ENCODE measurements at regions of chr1 and their contacts with region 1.

Region 1: DNA sequence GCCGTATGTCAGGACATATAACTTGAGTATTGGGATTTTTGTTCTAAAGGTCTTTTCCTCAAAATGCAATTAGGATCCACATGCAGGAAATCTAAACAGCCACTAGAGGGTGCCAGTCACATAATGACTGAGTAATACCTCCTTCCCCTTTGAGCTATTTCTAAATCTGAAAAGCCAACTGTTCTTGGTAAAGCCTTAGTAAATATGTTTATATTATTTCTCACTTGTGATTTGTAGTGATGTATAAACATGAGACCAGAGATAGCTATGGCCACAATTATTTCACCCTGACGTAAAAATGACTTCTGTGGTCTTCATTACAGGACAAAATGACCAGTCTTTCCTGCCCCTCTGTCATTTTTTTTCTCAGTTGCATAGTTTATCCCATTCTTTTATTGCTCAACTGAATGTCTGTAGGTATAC is 41.0 kb upstream of the DR1 start:
- DNase-seq: peak; percentile 46 to 67 (median 52)
- ATAC-seq: peak; percentile 90
- H3K4me3 ChIP-seq: no peak overlapping the region
- H3K27ac ChIP-seq: no peak overlapping the region
- H3K4me1 ChIP-seq: peaks cover 0 to 3% of the 10 kb centered on the region in 2 experiments; a peak in 2 of 5 replicates
- H3K27me3 ChIP-seq: no peaks in the 10 kb centered on the region
- CTCF ChIP-seq: peak; percentile 58 to 90 (median 79); a peak in 5 of 6 replicates
- EP300 ChIP-seq: no peak
- POLR2A ChIP-seq: no peak
- RAD21 ChIP-seq: peak; percentile 78 to 93

Region 2: DNA sequence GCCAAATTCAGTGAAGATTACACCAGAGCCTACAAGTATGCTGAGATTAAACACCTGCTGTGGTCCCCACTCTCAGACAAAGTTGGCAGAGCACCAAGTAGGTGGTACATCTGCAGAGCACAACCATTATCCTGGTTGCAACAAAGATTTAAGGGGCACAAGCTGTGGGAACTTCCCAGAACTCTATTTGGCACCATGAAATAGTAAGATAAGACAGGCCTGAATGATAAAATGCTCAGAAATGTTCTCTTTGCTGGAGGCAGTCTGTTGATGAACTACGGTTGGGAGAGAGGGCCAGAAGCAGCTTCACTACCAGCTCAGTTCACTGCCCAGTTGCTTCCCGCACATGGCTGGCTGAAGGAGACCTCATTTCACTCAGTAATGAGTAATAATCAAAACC is 453.0 kb before region 1 on chr1:
- CTCF ChIA-PET with region 1: no interaction called
- POLR2A ChIA-PET with region 1: no interaction called
- in situ Hi-C with region 1: no loop called
- intact Hi-C with region 1: no loop called
- DNase-seq: peak in 1 of 4 experiments; percentile 38
- ATAC-seq: peak; percentile 50
- H3K4me3 ChIP-seq: peak overlapping the region; percentile 7
- H3K27ac ChIP-seq: no peak overlapping the region
- H3K4me1 ChIP-seq: peaks cover 14 to 19% of the 10 kb centered on the region in 2 experiments; a peak in 4 of 5 replicates
- H3K27me3 ChIP-seq: no peaks in the 10 kb centered on the region
- CTCF ChIP-seq: no peak
- EP300 ChIP-seq: no peak
- POLR2A ChIP-seq: no peak
- RAD21 ChIP-seq: no peak

Region 3: DNA sequence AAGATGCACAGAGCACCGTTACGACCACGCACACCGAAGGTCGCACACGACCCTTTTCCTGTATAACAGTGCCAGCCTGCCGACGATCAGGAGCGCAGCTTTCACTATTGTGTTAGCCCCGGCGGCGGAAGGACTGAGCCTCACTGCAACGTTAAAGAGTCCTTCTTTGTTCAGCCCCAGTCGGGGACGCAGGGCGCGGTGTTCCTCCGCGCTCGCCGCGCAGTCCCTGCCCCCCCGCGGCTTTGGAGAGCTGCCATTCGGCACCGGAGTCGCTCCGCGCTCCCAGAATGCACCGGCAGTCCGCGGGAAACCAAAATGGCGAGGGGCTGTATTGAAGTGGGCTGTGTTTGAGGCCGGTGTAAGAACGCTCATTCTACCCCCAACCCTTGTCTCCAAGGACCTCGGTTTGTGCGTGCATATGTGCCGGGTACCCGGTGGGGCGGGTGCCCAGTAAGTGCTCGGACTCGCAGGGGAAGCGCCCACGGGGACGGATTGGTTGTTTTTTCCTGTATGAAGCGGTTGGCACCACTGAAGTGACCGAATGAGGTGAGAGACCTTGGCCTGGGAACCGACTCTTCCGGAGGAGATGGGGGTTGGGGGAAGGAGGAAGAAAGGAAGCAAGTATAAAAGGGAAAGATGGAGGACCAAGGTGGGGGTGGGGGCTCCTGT is 225.6 kb before region 1 on chr1 and contains the start of gene MTF2:
- CTCF ChIA-PET with region 1: no interaction called
- POLR2A ChIA-PET with region 1: no interaction called
- in situ Hi-C with region 1: no loop called
- intact Hi-C with region 1: loop called (anchors 5 kb)
- DNase-seq: peak; percentile 89 to 98 (median 90)
- ATAC-seq: peak; percentile 90
- H3K4me3 ChIP-seq: peak within 1 kb of the TSS; percentile 92
- H3K27ac ChIP-seq: peak within 1 kb of the TSS; percentile 96
- H3K4me1 ChIP-seq: peaks cover 0 to 6% of the 10 kb centered on the region in 2 experiments; a peak in 3 of 5 replicates
- H3K27me3 ChIP-seq: no peaks in the 10 kb centered on the region
- CTCF ChIP-seq: no peak
- EP300 ChIP-seq: peak; percentile 66
- POLR2A ChIP-seq: peak; percentile 98
- RAD21 ChIP-seq: peak; percentile 7 to 12; a peak in 2 of 4 replicates
- polyA plus RNA-seq, gene MTF2: 29.3 to 35.7 TPM

Region 4: DNA sequence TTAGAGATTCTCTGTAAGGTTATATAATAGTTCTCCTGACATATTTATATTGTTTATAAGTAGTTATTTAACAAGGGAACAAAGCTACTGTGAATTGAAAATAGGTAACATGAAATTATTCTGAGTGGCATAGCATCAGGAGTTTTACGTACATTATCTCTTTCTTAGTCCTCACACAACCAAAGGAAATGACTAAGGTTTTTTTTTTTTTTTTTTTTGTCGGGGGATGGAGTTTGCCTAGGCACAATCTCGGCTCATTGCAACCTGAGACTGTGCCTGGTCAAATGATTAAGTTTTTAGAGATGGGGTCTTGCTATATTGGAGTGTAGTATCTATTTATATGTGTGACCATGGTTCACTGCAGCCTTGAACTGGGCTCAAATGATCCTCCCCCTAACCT is 149.4 kb before region 1 on chr1:
- CTCF ChIA-PET with region 1: no interaction called
- POLR2A ChIA-PET with region 1: no interaction called
- in situ Hi-C with region 1: no loop called
- intact Hi-C with region 1: no loop called
- DNase-seq: peak in 2 of 4 experiments; percentile 16 to 25
- ATAC-seq: peak; percentile 69
- H3K4me3 ChIP-seq: no peak overlapping the region
- H3K27ac ChIP-seq: no peak overlapping the region
- H3K4me1 ChIP-seq: peaks cover 0 to 2% of the 10 kb centered on the region in 2 experiments; a peak in 1 of 5 replicates
- H3K27me3 ChIP-seq: no peaks in the 10 kb centered on the region
- CTCF ChIP-seq: no peak
- EP300 ChIP-seq: no peak
- POLR2A ChIP-seq: peak; percentile 27; the same call in 1 of the 2 replicates
- RAD21 ChIP-seq: no peak

Region 5: DNA sequence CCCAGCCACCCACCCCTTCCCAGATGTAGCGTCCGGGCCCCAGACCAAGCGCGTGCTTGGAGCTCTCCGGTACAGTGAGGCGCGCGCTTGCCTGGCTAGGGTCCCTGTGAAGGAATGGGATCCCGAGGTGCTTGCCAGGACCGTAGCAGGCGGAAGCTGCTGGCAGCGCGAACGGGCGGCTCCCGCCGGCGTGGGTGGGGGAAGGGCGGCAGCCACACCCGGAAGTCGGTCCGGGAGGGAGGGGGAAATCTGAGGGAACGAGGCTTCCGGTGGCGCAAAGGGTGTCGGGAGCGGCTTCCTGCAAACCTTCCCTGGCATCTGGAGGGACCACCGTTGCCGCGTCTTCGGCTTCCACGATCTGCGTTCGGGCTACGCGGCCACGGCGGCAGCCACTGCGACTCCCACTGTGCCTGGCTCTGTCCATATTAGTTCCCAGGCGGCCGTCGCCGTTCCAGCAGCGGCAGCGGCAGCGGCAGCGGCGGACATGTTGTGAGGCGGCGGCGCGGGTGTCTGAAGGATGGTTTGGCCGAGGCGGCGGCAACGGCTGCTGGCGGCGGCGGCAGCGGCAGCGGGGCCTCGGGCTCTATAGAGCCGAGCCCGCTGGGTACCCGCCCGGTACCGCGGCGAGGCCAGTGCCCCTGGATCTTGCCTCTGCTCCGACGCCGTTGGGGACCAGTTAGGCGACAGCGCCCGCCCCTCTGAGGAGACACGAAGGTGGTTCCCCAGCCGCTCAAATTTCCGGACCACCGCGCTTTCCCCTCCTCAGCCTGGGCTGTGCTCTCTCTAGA is 41.1 kb after region 1 on chr1 and contains the start of gene DR1:
- CTCF ChIA-PET with region 1: no interaction called
- POLR2A ChIA-PET with region 1: interaction called, 5 read pairs
- in situ Hi-C with region 1: no loop called
- intact Hi-C with region 1: loop called (anchors 5 kb)
- DNase-seq: peak; percentile 91 to 94 (median 94)
- ATAC-seq: peak; percentile 70
- H3K4me3 ChIP-seq: peak within 1 kb of the TSS; percentile 91
- H3K27ac ChIP-seq: peak within 1 kb of the TSS; percentile 99
- H3K4me1 ChIP-seq: peaks cover 0 to 4% of the 10 kb centered on the region in 2 experiments; a peak in 3 of 5 replicates
- H3K27me3 ChIP-seq: no peaks in the 10 kb centered on the region
- CTCF ChIP-seq: no peak
- EP300 ChIP-seq: peak; percentile 62
- POLR2A ChIP-seq: peak; percentile 98
- RAD21 ChIP-seq: no peak
- polyA plus RNA-seq, gene DR1: 8.1 to 9.3 TPM

Region 6: DNA sequence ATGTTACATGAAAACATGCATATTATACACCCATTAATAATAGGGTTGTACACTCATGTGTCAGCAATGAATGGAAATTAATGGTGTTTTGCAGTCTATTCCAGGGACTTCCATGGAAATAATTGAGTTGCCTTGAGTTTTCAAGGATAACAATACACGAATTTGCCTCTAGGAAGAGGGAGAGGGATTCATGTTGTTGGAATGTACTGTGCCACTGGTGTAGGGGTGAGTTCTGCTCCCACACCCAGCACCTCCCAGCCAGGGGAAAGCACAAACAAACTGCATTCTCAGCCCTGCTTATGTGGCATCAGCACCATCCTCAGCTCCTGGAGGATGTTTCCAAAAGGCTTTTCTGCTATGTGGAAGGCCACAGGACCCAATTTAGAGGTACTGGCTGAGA is 319.1 kb after region 1 on chr1:
- CTCF ChIA-PET with region 1: interaction called, 4 read pairs
- POLR2A ChIA-PET with region 1: no interaction called
- in situ Hi-C with region 1: loop called (anchors 10 kb)
- intact Hi-C with region 1: loop called (anchors 2 kb)
- DNase-seq: no peak
- ATAC-seq: no peak
- H3K4me3 ChIP-seq: no peak overlapping the region
- H3K27ac ChIP-seq: no peak overlapping the region
- H3K4me1 ChIP-seq: no peaks in the 10 kb centered on the region; a peak in 1 of 5 replicates
- H3K27me3 ChIP-seq: no peaks in the 10 kb centered on the region
- CTCF ChIP-seq: no peak
- EP300 ChIP-seq: no peak
- POLR2A ChIP-seq: no peak
- RAD21 ChIP-seq: no peak

Region 7: GRCh38 chr1:93629099-93630059 is 324.7 kb after region 1 on chr1:
- CTCF ChIA-PET with region 1: interaction called, 4 read pairs
- POLR2A ChIA-PET with region 1: no interaction called
- in situ Hi-C with region 1: loop called (anchors 10 kb)
- intact Hi-C with region 1: no loop called
- DNase-seq: peak; percentile 48 to 71 (median 52)
- ATAC-seq: peak; percentile 83
- H3K4me3 ChIP-seq: no peak overlapping the region
- H3K27ac ChIP-seq: no peak overlapping the region
- H3K4me1 ChIP-seq: no peaks in the 10 kb centered on the region
- H3K27me3 ChIP-seq: no peaks in the 10 kb centered on the region
- CTCF ChIP-seq: peak; percentile 70 to 95 (median 74)
- EP300 ChIP-seq: no peak
- POLR2A ChIP-seq: no peak
- RAD21 ChIP-seq: peak; percentile 99

Region 8: GRCh38 chr1:93814059-93814794 is 509.5 kb after region 1 on chr1:
- CTCF ChIA-PET with region 1: interaction called, 8 read pairs
- POLR2A ChIA-PET with region 1: no interaction called
- in situ Hi-C with region 1: no loop called
- intact Hi-C with region 1: loop called (anchors 5 kb)
- DNase-seq: peak; percentile 42 to 75 (median 50)
- ATAC-seq: peak; percentile 89
- H3K4me3 ChIP-seq: no peak overlapping the region
- H3K27ac ChIP-seq: no peak overlapping the region
- H3K4me1 ChIP-seq: peaks cover 0 to 15% of the 10 kb centered on the region in 2 experiments; a peak in 3 of 5 replicates
- H3K27me3 ChIP-seq: peaks cover 12 to 15% of the 10 kb centered on the region in 2 experiments; a peak in 4 of 5 replicates
- CTCF ChIP-seq: peak; percentile 88 to 96 (median 91)
- EP300 ChIP-seq: no peak
- POLR2A ChIP-seq: no peak
- RAD21 ChIP-seq: peak; percentile 99 to 100

Region 9: DNA sequence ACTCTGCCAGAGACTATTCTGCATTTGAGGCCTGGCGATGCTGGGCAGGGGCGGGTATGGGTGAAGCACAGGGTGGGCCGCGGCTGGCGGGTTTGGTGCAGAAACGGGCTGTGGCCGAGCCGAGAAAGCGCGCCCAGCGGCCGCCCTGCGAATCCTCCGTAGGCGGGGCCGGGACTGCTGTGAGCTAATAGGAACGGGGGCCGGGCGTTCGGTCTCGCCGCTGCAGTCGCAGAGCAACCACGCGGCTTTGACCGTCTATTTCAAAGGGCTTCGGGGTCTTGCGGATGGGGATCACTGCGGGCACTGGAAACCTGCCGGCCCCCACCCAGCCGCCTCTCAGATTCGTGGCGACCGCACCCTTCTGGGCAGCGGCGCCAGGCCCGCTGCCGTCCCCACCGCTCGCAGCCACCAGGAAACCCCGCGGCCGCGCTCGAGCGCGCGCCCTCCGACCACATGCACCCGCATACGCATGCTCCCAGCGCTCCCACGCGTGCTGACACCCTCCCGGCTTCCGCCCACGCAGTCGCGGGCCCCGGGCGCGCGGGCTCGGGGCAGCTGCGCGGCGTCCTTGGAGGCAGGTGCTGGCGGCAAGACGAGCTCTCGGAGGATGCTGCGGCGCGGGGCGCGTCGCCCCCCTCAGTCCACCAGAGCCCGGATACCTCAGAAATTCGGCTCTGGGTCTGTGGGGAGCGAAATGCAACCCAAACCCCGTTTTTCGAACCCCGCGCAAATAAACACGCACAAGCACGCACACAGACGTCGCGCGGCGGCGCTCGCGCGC is 541.7 kb after region 1 on chr1:
- CTCF ChIA-PET with region 1: no interaction called
- POLR2A ChIA-PET with region 1: no interaction called
- in situ Hi-C with region 1: no loop called
- intact Hi-C with region 1: loop called (anchors 2 kb)
- DNase-seq: peak; percentile 80 to 90 (median 82)
- ATAC-seq: peak; percentile 84
- H3K4me3 ChIP-seq: peak overlapping the region; percentile 87
- H3K27ac ChIP-seq: peak overlapping the region; percentile 87
- H3K4me1 ChIP-seq: peaks cover 17 to 21% of the 10 kb centered on the region in 2 experiments; a peak in 4 of 5 replicates
- H3K27me3 ChIP-seq: no peaks in the 10 kb centered on the region
- CTCF ChIP-seq: peak; percentile 31 to 51 (median 40); a peak in 5 of 6 replicates
- EP300 ChIP-seq: no peak
- POLR2A ChIP-seq: peak; percentile 82
- RAD21 ChIP-seq: no peak

Measured in K562 (cell line).